ENCODE measurements at regions of chr1 and their contacts with region 1.

Region 1: DNA sequence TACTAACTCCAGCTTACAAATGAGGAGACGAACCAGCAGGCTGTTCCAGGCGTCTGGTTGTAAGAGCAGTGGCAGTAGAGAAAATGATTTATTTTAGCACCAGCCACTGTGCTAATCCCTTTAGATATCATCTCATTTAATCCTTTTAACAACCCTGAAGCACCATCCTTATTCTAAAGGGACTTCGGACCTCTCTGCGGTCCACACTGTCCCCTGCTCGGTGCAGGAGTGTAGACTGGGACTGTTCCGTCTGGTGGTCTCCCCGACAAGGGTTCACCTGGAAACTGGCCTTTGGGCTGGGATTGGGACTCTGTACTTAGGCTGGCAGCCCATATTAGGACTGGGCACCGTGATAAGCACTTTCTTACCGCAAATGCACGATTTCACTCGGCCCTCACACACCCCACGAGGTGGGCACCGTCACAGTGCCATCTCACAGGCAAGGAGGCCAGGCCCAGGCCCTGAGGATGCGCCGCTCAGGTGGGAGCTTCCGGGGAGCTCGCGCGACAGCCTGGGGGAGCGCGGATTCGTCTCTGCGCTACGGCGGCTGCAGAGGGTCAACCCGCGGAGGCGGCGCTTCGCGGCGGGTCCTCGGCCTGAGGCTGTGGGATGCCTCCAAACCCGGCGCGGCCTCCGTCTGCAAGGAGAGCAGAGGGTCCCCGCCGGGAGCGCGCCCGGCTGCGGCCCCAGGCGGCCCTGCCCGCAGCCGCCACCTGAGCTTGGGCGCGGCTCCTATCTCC is 45.2 kb downstream of the ATP1A1 start:
- DNase-seq: peak; percentile 91
- ATAC-seq: peak; percentile 96
- H3K4me3 Mint-ChIP-seq: peak overlapping the region; percentile 91
- H3K27ac Mint-ChIP-seq: peak overlapping the region; percentile 90
- H3K4me1 Mint-ChIP-seq: peaks cover 57% of the 10 kb centered on the region
- H3K27me3 Mint-ChIP-seq: no peaks in the 10 kb centered on the region

Region 2: GRCh38 chr1:116334015-116334547 is 84.2 kb before region 1 on chr1:
- CTCF ChIA-PET with region 1: no interaction called
- DNase-seq: no peak
- ATAC-seq: no peak
- H3K4me3 Mint-ChIP-seq: no peak overlapping the region
- H3K27ac Mint-ChIP-seq: no peak overlapping the region
- H3K4me1 Mint-ChIP-seq: no peaks in the 10 kb centered on the region
- H3K27me3 Mint-ChIP-seq: peaks cover 3% of the 10 kb centered on the region

Region 3: DNA sequence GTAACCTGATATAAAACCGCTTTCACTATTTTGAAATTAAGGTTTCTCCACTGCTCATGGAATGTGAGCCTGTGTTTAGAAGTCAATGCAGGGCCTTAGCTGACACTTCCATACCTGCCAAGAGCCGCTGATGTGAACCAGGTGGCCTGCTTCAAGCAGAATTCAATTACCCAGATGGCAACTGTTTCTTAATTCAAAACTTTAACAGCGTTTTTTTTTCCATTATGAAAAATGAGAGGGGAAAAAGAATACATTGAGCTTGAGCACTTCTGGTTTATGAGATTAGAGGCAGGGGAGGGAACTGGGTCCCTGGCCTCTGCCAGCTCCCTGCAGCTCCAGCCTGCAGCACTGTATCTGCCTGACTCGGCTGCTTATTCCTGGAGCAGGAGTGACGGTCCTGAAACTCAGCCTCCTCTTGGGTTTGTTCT is 52.9 kb before region 1 on chr1:
- CTCF ChIA-PET with region 1: no interaction called
- DNase-seq: no peak
- ATAC-seq: no peak
- H3K4me3 Mint-ChIP-seq: no peak overlapping the region
- H3K27ac Mint-ChIP-seq: no peak overlapping the region
- H3K4me1 Mint-ChIP-seq: peaks cover 7% of the 10 kb centered on the region
- H3K27me3 Mint-ChIP-seq: peaks cover 25% of the 10 kb centered on the region

Region 4: GRCh38 chr1:116377541-116378529 is 40.4 kb before region 1 on chr1:
- CTCF ChIA-PET with region 1: interaction called, 14 read pairs
- DNase-seq: peak; percentile 67
- ATAC-seq: peak; percentile 66
- H3K4me3 Mint-ChIP-seq: peak overlapping the region; percentile 80
- H3K27ac Mint-ChIP-seq: peak overlapping the region; percentile 92
- H3K4me1 Mint-ChIP-seq: peaks cover 64% of the 10 kb centered on the region
- H3K27me3 Mint-ChIP-seq: no peaks in the 10 kb centered on the region

Region 5: DNA sequence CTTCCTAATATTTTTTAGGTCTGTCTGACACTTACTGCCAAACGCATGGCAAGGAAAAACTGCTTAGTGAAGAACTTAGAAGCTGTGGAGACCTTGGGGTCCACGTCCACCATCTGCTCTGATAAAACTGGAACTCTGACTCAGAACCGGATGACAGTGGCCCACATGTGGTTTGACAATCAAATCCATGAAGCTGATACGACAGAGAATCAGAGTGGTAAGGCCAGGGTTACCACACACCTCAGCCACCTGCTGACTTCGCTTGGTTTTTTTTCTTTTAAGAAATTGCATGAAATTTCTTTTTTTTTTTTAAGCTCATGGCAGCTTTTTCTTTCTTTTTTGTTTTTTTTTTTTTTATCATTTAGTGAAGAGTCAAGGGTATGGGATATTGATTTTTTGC is 28.1 kb before region 1 on chr1:
- CTCF ChIA-PET with region 1: interaction called, 15 read pairs
- DNase-seq: peak; percentile 86
- ATAC-seq: peak; percentile 90
- H3K4me3 Mint-ChIP-seq: no peak overlapping the region
- H3K27ac Mint-ChIP-seq: peak overlapping the region; percentile 48
- H3K4me1 Mint-ChIP-seq: peaks cover 51% of the 10 kb centered on the region
- H3K27me3 Mint-ChIP-seq: no peaks in the 10 kb centered on the region

Region 6: GRCh38 chr1:116429821-116430374 is 11.6 kb after region 1 on chr1:
- CTCF ChIA-PET with region 1: interaction called, 15 read pairs
- DNase-seq: no peak
- ATAC-seq: no peak
- H3K4me3 Mint-ChIP-seq: no peak overlapping the region
- H3K27ac Mint-ChIP-seq: no peak overlapping the region
- H3K4me1 Mint-ChIP-seq: no peaks in the 10 kb centered on the region
- H3K27me3 Mint-ChIP-seq: peaks cover 3% of the 10 kb centered on the region

Measured in activated CD8-positive, alpha-beta memory T cell treated with anti-CD3 and anti-CD28 coated beads, Interleukin-2, amount 10 ng/mL, durations not matched to agents 7 days and 5 days (primary cell).